Activated T-helper 1 cell treated with anti-CD3 and anti-CD28 coated beads, Interleukin-12 subunit alpha, Interleukin-12 subunit beta, Interleukin-2, Interleukin-4 antibody, amounts not matched to agents 30 ng/mL and 10 ng/mL and 1 ng/mL, durations not matched to agents 14 hours and 24 hours and 36 hours (primary cell): ENCODE measurements at regions of chr9 and their contacts with region 1.

Region 1: DNA sequence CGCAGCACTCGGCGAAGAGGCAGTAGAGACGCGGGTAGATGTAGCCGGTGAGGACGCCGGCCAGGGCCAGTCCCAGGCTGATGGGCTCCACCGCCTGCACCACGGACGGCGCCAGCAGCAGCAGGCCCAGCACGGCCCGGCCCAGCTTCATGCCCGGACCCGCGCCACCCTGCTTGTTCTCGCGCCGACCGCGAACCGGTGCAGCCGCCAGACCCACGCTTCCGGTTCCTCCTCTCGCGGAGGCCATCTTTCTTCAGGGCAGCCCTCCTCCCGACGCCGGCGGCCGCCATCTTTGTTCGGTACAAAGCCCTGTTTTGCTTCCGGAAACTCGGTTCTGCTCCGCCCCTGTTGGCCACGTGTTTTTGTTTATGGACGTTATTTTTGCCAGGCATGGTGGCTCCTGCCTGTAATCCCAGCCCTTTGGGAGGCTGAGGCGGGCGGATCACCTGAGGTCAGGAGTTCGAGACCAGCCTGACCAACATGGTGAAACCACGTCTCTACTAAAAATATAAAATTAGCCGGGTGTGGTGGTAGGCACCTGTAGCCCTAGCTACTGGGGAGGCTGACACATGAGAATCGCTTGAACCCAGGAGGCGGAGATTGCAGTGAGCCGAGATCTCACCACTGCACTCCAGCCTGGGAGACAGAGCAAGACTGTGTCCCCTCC is at the start of gene TOR1A:
- DNase-seq: peak; percentile 89
- H3K4me3 Mint-ChIP-seq: peak within 1 kb of the TSS; percentile 91
- H3K27ac Mint-ChIP-seq: peak within 1 kb of the TSS; percentile 86
- H3K4me1 Mint-ChIP-seq: peaks cover 12% of the 10 kb centered on the region
- H3K27me3 Mint-ChIP-seq: no peaks in the 10 kb centered on the region
- total RNA-seq, gene TOR1A: 61.3 and 62.1 TPM in 2 replicates

Region 2: GRCh38 chr9:129802851-129803675 is 21.0 kb before region 1 on chr9 and contains the start of gene TOR1B:
- intact Hi-C with region 1: loop called (anchors 1 kb)
- DNase-seq: peak; percentile 94
- H3K4me3 Mint-ChIP-seq: peak within 1 kb of the TSS; percentile 90
- H3K27ac Mint-ChIP-seq: peak within 1 kb of the TSS; percentile 90
- H3K4me1 Mint-ChIP-seq: peaks cover 31% of the 10 kb centered on the region
- H3K27me3 Mint-ChIP-seq: no peaks in the 10 kb centered on the region
- total RNA-seq, gene TOR1B: 21.9 and 25.6 TPM in 2 replicates

Region 3: GRCh38 chr9:129868916-129869486 is 44.9 kb after region 1 on chr9:
- intact Hi-C with region 1: loop called (anchors 5 kb)
- DNase-seq: peak; percentile 83
- H3K4me3 Mint-ChIP-seq: peak overlapping the region; percentile 47
- H3K27ac Mint-ChIP-seq: peak overlapping the region; percentile 87
- H3K4me1 Mint-ChIP-seq: peaks cover 60% of the 10 kb centered on the region
- H3K27me3 Mint-ChIP-seq: no peaks in the 10 kb centered on the region

Region 4: DNA sequence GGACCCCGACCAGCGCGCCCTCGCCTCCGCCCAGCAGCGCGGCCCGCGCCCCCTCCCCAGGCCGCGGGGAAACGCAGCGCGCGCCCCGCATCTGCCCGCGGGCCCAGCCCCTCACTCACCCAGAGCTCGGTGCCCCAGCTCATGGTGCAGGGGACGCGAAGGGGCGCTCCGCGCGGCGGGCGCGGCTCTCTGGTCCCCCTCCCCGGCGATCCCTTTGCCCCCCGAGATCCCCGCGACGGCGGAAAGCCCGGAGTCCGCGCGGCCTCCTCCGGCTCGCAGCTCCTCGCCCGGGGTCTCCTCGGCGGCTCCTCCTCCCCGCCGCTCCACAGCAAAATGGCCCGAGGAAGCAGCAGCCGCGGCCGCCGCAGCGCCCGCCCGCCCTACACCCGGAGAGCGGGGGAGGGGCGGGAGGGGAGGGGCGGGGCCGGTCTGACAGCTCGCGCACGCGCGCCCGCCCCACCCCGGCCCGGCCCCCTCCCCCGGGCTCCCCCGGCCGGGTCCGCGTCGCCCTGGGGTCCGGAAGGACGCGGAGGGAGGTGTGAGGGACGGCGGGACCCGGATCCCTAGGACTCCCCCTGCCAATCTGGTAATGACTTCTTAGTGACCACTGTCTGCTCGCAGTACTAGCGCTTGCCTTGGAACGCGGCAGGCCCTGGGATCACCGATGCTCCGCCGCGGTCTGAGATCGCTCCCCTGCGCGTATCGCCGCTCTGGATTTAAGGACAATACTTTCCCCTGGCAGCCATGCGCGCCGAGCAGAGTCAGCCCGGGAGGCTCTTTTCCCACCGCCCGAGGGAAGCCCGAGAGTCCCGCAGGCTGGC is 219.0 kb after region 1 on chr9 and contains the start of gene FNBP1:
- intact Hi-C with region 1: loop called (anchors 5 kb)
- DNase-seq: peak; percentile 78
- H3K4me3 Mint-ChIP-seq: peak within 1 kb of the TSS; percentile 97
- H3K27ac Mint-ChIP-seq: peak within 1 kb of the TSS; percentile 99
- H3K4me1 Mint-ChIP-seq: peaks cover 55% of the 10 kb centered on the region
- H3K27me3 Mint-ChIP-seq: no peaks in the 10 kb centered on the region
- total RNA-seq, gene FNBP1: 195 and 202 TPM in 2 replicates

Region 5: DNA sequence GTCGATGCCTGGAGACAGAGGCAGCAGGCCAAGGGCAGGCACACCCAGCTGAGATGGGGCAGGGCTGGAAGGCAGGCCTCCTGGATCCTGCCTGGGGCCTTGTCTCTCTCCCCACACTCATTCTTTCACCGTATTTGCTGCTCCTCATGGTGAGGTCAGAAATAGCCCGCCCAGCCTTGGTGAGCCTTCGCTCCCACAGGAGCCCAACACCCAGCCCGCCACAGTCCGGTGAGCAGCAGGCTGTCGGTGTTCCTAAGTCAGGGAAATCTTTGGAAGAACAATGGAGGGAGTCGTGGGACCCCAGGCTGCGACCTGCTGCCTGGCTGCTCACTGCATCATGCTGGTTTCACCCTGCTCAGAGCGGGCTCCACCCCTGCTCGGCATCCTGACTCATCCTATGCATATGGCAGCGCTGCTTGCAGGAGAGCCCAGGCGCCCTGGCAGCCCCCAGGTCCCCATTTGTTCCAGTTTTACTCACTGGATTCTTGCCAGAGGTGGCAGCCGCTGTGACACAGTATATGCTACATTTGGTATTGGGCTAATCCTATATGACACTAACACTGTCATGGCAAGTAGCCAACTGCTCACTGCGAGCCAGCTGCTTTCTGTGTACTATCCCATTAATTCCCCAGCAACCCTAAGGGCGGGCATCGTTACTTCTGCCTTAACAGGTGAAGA is 294.9 kb after region 1 on chr9:
- intact Hi-C with region 1: no loop called
- DNase-seq: no peak
- H3K4me3 Mint-ChIP-seq: no peak overlapping the region
- H3K27ac Mint-ChIP-seq: no peak overlapping the region
- H3K4me1 Mint-ChIP-seq: no peaks in the 10 kb centered on the region
- H3K27me3 Mint-ChIP-seq: no peaks in the 10 kb centered on the region

Region 6: GRCh38 chr9:130235897-130236668 is 412.0 kb after region 1 on chr9:
- intact Hi-C with region 1: loop called (anchors 5 kb)
- DNase-seq: peak; percentile 59
- H3K4me3 Mint-ChIP-seq: no peak overlapping the region
- H3K27ac Mint-ChIP-seq: no peak overlapping the region
- H3K4me1 Mint-ChIP-seq: peaks cover 20% of the 10 kb centered on the region
- H3K27me3 Mint-ChIP-seq: peaks cover 2% of the 10 kb centered on the region